Activated CD4-positive, alpha-beta T cell treated with anti-CD3 and anti-CD28 coated beads for 36 hours (primary cell): ENCODE measurements at regions of chr6 and their contacts with region 1.

Region 1: GRCh38 chr6:26537846-26538571 is at the start of gene HMGN4:
- DNase-seq: peak; percentile 89
- ATAC-seq: peak; percentile 63
- H3K4me3 Mint-ChIP-seq: peak within 1 kb of the TSS; percentile 89
- H3K27ac Mint-ChIP-seq: peak within 1 kb of the TSS; percentile 99
- H3K4me1 Mint-ChIP-seq: peaks cover 57% of the 10 kb centered on the region
- H3K27me3 Mint-ChIP-seq: no peaks in the 10 kb centered on the region
- total RNA-seq, gene HMGN4: 63.6 to 86.4 TPM

Region 2: DNA sequence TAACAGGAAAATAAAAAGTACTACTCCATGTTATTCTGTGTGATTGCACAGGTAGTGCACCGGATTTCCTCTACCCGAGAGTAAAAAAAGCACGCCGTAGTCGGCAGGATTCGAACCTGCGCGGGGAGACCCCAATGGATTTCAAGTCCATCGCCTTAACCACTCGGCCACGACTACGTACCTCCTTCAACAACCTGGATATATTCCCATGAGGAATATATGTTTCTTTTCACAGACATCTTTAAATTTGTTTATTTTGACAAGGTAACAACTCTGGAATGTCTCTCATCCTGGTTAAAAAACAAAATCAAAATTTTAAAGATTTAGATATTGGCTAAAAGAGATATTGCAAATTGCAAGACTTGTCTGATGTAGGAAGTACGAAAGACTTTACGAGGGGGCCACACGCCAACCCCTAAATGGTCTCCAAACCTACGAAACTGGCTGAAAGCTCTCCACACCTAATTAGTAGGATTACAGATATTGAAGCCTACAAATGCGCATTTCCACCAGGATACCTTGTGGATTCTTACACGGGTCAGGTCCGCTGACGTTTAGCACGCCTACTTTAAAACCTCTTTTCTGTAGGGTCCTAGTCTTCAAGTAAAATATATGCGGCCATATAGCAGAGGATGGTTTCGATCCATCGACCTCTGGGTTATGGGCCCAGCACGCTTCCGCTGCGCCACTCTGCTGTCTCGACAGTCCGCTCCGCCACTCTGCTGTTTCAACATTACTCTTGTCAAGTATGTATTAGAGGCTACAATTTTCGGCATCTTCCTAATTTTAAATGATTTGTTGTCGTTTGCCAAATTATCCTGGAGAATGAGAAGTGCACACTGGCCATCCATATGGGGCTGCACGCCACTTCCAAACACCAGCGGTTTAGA is 225.3 kb before region 1 on chr6:
- CTCF ChIA-PET with region 1: interaction called, 3 read pairs
- POLR2A ChIA-PET with region 1: no interaction called
- intact Hi-C with region 1: loop called in 1 of 2 experiments (anchors 1 kb)
- DNase-seq: peak; percentile 89
- ATAC-seq: peak; percentile 69
- H3K4me3 Mint-ChIP-seq: peak overlapping the region; percentile 88
- H3K27ac Mint-ChIP-seq: peak overlapping the region; percentile 90
- H3K4me1 Mint-ChIP-seq: peaks cover 37% of the 10 kb centered on the region
- H3K27me3 Mint-ChIP-seq: peaks cover 3% of the 10 kb centered on the region

Region 3: GRCh38 chr6:26342106-26343004 is 195.7 kb before region 1 on chr6:
- CTCF ChIA-PET with region 1: interaction called, 3 read pairs
- POLR2A ChIA-PET with region 1: interaction called, 4 read pairs
- intact Hi-C with region 1: loop called in 1 of 2 experiments (anchors 1 kb)
- DNase-seq: peak; percentile 63
- ATAC-seq: peak; percentile 60
- H3K4me3 Mint-ChIP-seq: peak overlapping the region; percentile 73
- H3K27ac Mint-ChIP-seq: peak overlapping the region; percentile 81
- H3K4me1 Mint-ChIP-seq: peaks cover 12% of the 10 kb centered on the region
- H3K27me3 Mint-ChIP-seq: no peaks in the 10 kb centered on the region

Region 4: DNA sequence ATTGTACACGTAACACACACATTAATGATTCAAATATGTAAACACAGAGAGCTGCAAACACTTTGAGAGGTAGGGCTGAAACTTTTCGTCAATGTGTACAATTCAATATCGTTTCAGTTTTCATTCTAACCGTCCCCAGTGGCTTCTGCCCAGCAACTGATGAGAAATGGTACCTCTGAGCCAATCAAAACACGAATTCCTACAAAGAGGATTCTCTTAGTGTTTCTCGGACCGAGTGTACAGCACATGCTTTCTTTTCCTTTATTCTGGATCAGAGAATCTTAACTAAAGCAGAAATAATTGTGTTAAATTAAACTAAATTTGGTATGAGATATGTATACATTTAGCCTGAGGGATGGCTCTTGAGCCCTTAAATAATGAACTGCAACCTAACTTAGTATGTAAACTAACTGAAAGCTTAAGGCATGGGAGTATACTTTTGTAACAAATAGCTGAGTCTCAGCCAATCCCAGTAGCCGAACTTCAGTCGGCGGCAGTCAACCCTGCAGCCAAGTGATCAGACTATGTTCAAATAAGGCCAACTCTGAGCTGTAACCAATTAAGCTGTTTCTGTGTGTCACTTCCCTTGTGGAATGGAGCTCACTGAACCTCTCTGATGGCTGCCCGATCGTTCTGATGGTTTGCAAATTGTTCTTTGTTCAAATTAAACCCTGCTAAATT is 64.1 kb before region 1 on chr6:
- CTCF ChIA-PET with region 1: no interaction called
- POLR2A ChIA-PET with region 1: interaction called, 6 read pairs
- intact Hi-C with region 1: loop called (anchors 1 kb)
- DNase-seq: peak; percentile 86
- ATAC-seq: peak; percentile 94
- H3K4me3 Mint-ChIP-seq: peak overlapping the region; percentile 100
- H3K27ac Mint-ChIP-seq: peak overlapping the region; percentile 100
- H3K4me1 Mint-ChIP-seq: peaks cover 38% of the 10 kb centered on the region
- H3K27me3 Mint-ChIP-seq: no peaks in the 10 kb centered on the region

Region 5: DNA sequence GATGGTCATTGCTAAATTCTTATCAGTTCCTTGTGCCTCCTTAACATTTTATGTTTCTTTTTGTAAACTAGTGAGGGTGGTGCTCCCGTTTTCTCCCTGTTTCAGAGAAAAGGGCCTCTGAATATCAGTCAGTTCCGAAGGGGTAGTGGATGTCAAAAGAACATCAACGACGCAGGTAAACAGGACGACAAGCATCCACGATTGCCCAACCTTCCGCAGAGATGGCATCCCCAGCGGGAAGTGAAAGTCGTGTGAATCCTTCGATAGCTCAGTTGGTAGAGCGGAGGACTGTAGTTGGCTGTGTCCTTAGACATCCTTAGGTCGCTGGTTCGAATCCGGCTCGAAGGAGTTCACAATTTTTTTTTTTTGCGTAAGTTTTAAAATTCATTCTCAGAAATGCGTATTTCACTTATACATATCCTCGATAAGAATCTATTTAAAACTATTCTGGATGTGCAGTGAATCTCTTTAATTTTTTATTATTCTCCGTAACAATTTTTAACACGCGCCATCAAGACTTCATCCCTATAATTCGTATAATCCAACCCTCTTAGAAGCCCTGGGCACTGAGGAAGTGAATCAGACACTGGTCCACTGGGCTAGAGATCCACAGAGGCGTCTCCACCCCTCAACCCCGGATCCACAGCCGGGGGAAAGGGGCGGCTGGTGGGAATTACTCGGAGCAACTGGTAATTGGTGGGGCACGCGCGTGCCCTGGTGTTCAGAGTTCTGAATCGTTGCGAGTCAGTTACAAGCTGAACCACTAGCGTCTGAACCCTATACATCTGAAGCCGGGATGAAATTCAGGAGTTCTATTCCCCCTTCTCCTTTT is 30.8 kb after region 1 on chr6:
- CTCF ChIA-PET with region 1: interaction called, 4 read pairs
- POLR2A ChIA-PET with region 1: no interaction called
- intact Hi-C with region 1: loop called (anchors 1 kb)
- DNase-seq: peak; percentile 97
- ATAC-seq: peak; percentile 74
- H3K4me3 Mint-ChIP-seq: peak overlapping the region; percentile 85
- H3K27ac Mint-ChIP-seq: peak overlapping the region; percentile 81
- H3K4me1 Mint-ChIP-seq: peaks cover 29% of the 10 kb centered on the region
- H3K27me3 Mint-ChIP-seq: peaks cover 2% of the 10 kb centered on the region